ENCODE measurements at regions of chr2 and their contacts with region 1.

Region 1: GRCh38 chr2:206783718-206784117 is 18.3 kb downstream of the FASTKD2 start:
- DNase-seq: peak in 1 of 2 experiments; percentile 19
- ATAC-seq: peak; percentile 93 to 95; a peak in 5 of 6 replicates
- H3K4me3 ChIP-seq: no peak overlapping the region
- H3K27ac ChIP-seq: no peak overlapping the region
- H3K4me1 ChIP-seq: no peaks in the 10 kb centered on the region
- CTCF ChIP-seq: peak; percentile 46
- EP300 ChIP-seq: no peak
- POLR2A ChIP-seq: no peak
- RAD21 ChIP-seq: no peak

Region 2: DNA sequence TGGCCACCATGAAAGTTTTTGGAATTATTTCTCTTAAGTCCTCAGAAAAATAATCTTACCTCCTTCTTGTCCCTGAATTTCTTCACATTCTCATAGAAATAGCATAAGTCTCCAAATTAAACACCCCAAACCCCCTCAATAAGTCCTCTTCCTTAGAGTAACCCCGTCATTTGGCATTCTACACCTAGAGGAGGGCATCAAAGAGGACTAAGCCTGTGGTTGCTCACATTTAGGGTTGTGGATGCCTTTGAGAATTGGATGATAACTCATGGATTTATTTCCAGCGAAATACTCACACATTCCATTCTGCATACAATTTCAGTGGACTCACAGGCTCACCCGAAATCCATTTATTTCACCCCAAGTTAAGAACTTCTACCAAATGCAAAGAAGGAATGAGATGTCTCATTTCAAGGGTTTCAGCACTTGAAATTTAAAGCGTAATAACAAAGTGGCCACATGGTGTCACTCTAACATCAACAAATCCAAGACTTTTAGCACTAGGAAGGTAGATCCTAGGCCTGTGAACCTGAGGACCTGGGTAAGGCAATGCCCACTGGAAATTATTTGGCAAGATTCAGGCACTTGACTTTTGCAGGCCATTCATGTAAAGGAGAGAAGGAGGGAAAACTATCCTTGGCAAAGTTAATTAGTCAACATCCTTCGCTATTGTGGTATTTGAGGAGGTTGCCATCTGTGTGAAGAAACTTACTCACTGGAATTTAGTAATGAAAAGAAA is 90.2 kb before region 1 on chr2:
- CTCF ChIA-PET with region 1: interaction called, 20 read pairs
- POLR2A ChIA-PET with region 1: interaction called, 5 read pairs
- DNase-seq: peak; percentile 40 to 71
- ATAC-seq: peak; percentile 93 to 94
- H3K4me3 ChIP-seq: no peak overlapping the region
- H3K27ac ChIP-seq: no peak overlapping the region
- H3K4me1 ChIP-seq: no peaks in the 10 kb centered on the region
- CTCF ChIP-seq: peak; percentile 79
- EP300 ChIP-seq: no peak
- POLR2A ChIP-seq: no peak
- RAD21 ChIP-seq: peak; percentile 87 to 90

Region 3: DNA sequence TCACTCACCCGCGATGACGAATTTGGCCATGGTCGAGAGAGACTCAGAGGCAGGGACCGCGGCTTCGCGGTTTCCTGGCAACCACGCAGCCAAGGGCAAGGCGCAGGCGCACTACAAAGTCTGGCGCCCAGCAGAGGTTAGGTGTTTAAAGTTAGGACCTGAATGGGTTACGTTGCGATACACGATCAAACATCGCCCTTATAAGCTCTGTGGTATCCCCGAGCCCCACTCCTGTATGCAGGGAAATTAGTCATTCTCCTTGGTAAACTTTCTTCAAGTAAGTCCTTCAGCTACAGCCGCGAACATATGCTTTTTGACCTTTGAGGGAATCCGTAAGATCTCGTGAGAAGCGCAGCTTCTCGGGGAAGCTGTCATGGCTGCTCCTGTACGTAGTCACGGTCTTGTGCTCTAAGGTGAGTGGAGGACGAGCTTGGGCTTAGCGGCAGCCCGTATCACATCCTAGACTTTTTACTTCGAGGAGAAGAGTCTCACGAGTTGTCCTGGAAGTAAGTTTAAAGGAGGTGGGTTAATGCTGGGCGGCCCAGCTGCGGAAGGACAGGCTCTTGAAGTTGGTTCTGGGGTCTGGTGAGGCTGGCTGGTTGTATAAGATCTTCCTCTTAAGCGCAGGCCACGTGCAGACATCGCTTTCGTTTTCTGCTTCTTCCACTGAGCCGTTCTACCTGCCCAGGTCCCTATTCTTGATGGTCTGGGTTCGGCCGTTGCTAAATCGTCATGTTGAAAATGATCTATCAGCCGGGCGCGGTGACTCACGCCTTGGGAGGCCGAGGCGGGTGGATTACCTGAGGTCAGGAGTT is 18.3 kb before region 1 on chr2 and contains the starts of genes FASTKD2 and MDH1B:
- CTCF ChIA-PET with region 1: interaction called, 23 read pairs
- POLR2A ChIA-PET with region 1: interaction called, 6 read pairs
- DNase-seq: peak; percentile 72 to 94
- ATAC-seq: peak; percentile 95 to 96
- H3K4me3 ChIP-seq: peak within 1 kb of the TSS; percentile 84
- H3K27ac ChIP-seq: peak within 1 kb of the TSS; percentile 93 to 95
- H3K4me1 ChIP-seq: peaks cover 10% of the 10 kb centered on the region
- CTCF ChIP-seq: no peak
- EP300 ChIP-seq: no peak
- POLR2A ChIP-seq: peak; percentile 75
- RAD21 ChIP-seq: no peak
- polyA plus RNA-seq, gene FASTKD2: 56.9 and 60.1 TPM in 2 replicates
- polyA plus RNA-seq, gene MDH1B: 1.3 and 2.8 TPM in 2 replicates